ENCODE measurements at regions of chr7 and their contacts with region 1.

Region 1: DNA sequence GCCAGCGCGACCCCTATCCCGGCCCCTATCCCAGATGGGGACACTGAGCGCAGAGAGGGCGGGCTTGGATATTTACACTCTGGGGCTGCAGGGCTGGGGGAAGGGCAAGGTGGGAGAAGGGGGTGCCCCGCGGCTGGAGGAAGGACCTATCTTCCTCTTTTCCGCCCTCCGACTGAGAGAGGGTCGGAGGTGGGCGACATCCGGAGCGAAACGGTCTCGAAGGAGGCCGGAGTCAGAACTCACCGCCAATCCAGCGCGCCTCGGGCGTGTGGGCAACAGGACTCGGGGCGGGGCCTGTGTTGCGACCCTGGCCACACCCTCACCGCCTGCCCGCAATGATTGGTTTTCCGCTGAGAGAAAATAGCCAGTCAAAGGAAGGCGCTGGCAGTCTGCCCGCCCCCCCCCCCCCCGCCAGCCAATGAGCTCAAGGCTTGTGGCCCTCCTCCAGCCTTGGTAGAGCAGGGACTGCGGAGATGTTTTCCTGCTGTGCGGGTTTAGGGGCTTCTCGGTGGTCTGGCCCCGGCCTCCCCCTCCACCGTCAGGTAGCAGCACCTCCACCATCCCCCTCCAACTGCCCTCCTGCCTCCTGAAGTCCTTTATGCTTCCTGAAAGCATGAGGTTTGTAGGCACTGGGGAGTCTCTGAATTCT is at the start of gene METTL27:
- DNase-seq: no peak
- ATAC-seq: peak; percentile 91
- H3K4me3 ChIP-seq: peak within 1 kb of the TSS; percentile 70 to 76
- H3K27ac ChIP-seq: peak within 1 kb of the TSS; percentile 83
- H3K4me1 ChIP-seq: peaks cover 21% of the 10 kb centered on the region
- H3K27me3 ChIP-seq: no peaks in the 10 kb centered on the region
- CTCF ChIP-seq: no peak
- total RNA-seq, gene METTL27: 3.4 TPM

Region 2: GRCh38 chr7:73618538-73618937 is 223.8 kb before region 1 on chr7:
- CTCF ChIA-PET with region 1: interaction called, 12 read pairs
- POLR2A ChIA-PET with region 1: no interaction called
- in situ Hi-C with region 1: no loop called
- intact Hi-C with region 1: no loop called
- DNase-seq: no peak
- ATAC-seq: no peak
- H3K4me3 ChIP-seq: no peak overlapping the region
- H3K27ac ChIP-seq: no peak overlapping the region
- H3K4me1 ChIP-seq: peaks cover 3% of the 10 kb centered on the region; the same call in 1 of the 2 replicates
- H3K27me3 ChIP-seq: no peaks in the 10 kb centered on the region
- CTCF ChIP-seq: no peak

Region 3: DNA sequence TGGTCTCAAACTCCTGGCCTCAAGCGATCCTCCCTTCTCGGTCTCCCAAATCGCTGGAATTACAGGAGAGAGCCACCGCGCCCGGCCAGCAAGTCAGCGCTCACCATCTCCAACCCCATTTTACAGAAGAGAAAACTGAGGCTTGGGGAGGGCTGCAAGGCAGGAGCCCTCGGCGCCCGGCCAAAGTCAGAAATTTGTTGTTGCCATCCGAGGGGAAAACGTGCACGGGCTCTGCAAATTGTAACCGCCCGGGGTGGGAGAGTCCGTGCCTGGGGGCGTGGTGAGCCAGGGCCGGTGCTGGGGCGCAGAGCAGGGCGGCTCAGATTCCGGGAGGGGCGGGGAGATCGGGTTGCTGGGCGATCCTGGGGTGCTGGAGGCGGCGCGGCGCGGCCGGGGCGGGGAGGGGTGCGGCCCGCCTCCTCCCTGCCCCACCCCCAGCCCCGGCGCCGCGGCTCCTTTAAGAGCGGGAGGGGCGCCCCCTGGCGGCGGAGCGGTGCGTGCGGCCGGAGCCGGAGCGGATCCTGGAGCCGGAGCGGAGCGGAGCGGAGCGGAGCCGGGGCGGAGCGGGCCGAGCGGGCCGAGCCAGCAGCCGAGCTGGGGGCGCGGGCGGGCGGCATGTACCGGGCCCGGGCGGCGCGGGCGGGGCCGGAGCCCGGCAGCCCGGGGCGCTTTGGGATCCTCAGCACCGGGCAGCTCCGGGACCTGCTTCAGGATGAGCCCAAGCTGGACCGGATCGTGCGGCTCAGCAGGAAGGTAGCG is 174.8 kb before region 1 on chr7 and contains the start of gene VPS37D:
- CTCF ChIA-PET with region 1: interaction called, 10 read pairs
- POLR2A ChIA-PET with region 1: no interaction called
- in situ Hi-C with region 1: no loop called
- intact Hi-C with region 1: no loop called
- DNase-seq: no peak
- ATAC-seq: peak; percentile 92
- H3K4me3 ChIP-seq: peak within 1 kb of the TSS; percentile 45 to 73
- H3K27ac ChIP-seq: peak within 1 kb of the TSS; percentile 58; the same call in 1 of the 2 replicates
- H3K4me1 ChIP-seq: peaks cover 8% of the 10 kb centered on the region
- H3K27me3 ChIP-seq: no peaks in the 10 kb centered on the region
- CTCF ChIP-seq: peak; percentile 97
- total RNA-seq, gene VPS37D: 4.4 TPM

Region 4: GRCh38 chr7:73749931-73750776 is 92.2 kb before region 1 on chr7:
- CTCF ChIA-PET with region 1: no interaction called
- POLR2A ChIA-PET with region 1: interaction called, 10 read pairs
- in situ Hi-C with region 1: no loop called
- intact Hi-C with region 1: no loop called
- DNase-seq: no peak
- ATAC-seq: no peak
- H3K4me3 ChIP-seq: no peak overlapping the region
- H3K27ac ChIP-seq: no peak overlapping the region
- H3K4me1 ChIP-seq: no peaks in the 10 kb centered on the region
- H3K27me3 ChIP-seq: no peaks in the 10 kb centered on the region
- CTCF ChIP-seq: no peak

Region 5: DNA sequence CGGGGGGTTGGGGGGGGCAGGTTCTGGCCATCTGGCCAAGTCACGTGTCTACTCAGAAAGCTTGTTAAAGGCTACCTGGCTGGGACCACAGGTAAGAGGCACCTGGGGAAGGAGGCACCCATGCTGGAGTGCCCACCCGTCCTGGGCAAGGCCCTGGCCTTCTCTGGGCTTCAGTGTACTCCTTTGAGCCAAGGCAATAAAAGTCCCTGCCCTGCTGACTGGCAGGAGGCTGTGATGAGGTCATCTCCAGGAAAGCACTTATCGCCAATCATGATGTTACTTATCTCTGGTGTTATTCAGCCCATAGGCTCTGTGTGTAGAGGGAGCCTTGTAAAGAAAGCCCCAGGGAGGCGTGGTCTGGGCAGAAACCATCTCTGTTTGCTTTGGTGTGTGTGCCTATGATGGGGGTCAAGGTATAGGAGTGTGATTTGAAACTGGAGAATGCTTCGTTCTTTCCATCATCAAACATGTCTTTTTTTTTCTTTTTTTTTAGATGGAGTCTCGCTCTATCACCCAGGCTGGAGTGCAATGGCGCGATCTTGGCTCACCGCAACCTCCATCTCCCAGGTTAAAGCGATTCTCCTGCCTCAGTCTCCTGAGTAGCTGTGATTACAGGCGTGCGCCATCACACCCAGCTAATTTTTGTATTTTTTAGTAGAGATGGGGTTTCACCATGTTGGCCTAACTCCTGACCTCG is 14.1 kb before region 1 on chr7:
- CTCF ChIA-PET with region 1: interaction called, 12 read pairs
- POLR2A ChIA-PET with region 1: interaction called, 7 read pairs
- in situ Hi-C with region 1: no loop called
- intact Hi-C with region 1: no loop called
- DNase-seq: peak; percentile 88
- ATAC-seq: peak; percentile 62
- H3K4me3 ChIP-seq: peak overlapping the region in 1 of 2 experiments; percentile 33; a peak in 2 of 4 replicates
- H3K27ac ChIP-seq: peak overlapping the region; percentile 96
- H3K4me1 ChIP-seq: peaks cover 48% of the 10 kb centered on the region
- H3K27me3 ChIP-seq: no peaks in the 10 kb centered on the region
- CTCF ChIP-seq: no peak

Measured in Panc1 (cell line).